ENCODE measurements at regions of chr2 and their contacts with region 1.

Region 1: DNA sequence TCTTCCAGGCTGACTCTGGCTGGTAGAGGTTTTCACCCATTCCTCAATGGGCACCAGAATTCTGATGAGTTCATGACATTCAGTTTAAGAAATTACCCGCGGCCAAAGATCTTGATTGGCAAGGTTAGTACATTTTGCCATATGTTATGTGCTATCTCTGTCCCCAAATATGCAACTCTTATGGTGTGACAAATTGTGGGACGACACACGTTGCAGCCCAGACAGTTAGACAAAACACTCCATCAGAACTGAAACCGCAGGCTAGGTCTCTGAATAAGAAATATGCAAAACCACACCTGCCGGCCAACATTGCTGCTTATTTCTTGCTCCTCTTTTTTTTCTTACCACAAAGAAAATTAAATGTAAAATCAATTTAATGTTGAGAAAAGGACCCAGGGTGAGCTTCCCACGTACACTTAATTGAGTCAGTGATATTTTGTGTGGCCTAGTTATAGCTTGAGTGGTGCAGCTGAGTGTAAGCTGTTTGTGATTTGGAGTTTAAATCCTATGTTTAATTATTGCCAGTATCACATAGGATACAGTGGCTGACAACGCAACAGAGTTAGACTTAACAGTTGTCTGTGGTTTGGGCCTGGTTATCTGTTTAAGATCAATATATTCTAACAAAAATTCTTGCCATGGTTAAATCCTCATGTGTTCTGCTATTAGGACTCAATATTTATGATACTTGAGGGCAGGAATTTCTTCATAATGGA is 35.7 kb upstream of the LTBP1 start:
- DNase-seq: no peak
- H3K4me3 ChIP-seq: no peak overlapping the region
- H3K27ac ChIP-seq: no peak overlapping the region
- H3K4me1 ChIP-seq: no peaks in the 10 kb centered on the region
- H3K27me3 ChIP-seq: no peaks in the 10 kb centered on the region
- CTCF ChIP-seq: no peak

Region 2: DNA sequence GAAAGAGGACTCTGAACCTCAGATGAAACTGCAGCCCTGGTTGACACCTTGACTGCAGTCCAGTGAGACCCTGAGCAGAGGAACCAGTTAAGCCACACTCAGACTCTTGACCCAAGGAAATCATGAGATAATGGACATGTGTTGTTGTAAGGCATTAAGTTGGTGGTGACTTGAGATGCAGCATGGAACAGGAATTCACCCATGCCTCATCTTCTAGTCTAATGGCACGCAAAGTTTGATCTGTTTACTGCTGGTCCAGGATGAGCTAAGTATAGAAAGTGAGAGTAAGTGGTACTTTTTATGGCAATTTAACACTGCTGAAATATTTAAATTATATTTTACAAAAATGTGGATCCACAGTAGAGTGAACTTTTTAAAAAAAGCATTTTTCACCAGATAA is 15.6 kb before region 1 on chr2:
- CTCF ChIA-PET with region 1: no interaction called
- POLR2A ChIA-PET with region 1: no interaction called
- intact Hi-C with region 1: no loop called
- DNase-seq: no peak
- H3K4me3 ChIP-seq: no peak overlapping the region
- H3K27ac ChIP-seq: no peak overlapping the region
- H3K4me1 ChIP-seq: no peaks in the 10 kb centered on the region
- H3K27me3 ChIP-seq: no peaks in the 10 kb centered on the region
- CTCF ChIP-seq: no peak

Region 3: DNA sequence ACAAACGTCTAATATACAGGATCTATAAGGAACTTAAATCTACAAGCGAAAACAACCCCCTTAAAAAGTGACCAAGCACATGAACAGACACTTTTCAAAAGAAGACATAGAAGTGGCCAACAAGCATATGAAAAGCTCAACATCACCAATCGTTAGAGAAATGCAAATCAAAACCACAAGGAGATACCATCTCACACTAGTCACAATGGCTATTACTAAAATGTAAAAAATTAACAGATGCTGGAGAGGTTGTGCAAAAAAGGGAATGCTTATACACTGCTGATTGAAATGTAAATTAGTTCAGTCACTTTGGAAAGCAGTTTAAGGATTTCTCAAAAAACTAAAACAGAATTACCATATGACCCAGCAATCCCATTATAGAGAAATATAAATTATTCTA is 1836.6 kb after region 1 on chr2:
- CTCF ChIA-PET with region 1: no interaction called
- POLR2A ChIA-PET with region 1: interaction called, 16 read pairs
- intact Hi-C with region 1: no loop called
- DNase-seq: no peak
- H3K4me3 ChIP-seq: no peak overlapping the region
- H3K27ac ChIP-seq: no peak overlapping the region
- H3K4me1 ChIP-seq: no peaks in the 10 kb centered on the region
- H3K27me3 ChIP-seq: no peaks in the 10 kb centered on the region
- CTCF ChIP-seq: no peak

Measured in PC-9 (cell line).